Dendritic cell treated with granulocyte-macrophage colony-stimulating factor and Interleukin-4, amounts not matched to agents 40 ng/mL and 50 ng/mL, for 4 days (primary cell): ENCODE measurements at regions of chr21 and their contacts with region 1.

Region 1: GRCh38 chr21:15468368-15468767 is 261.4 kb upstream of the USP25 start:
- H3K4me3 Mint-ChIP-seq: no peak overlapping the region
- H3K27ac Mint-ChIP-seq: no peak overlapping the region
- H3K4me1 Mint-ChIP-seq: no peaks in the 10 kb centered on the region
- H3K27me3 Mint-ChIP-seq: peaks cover 2% of the 10 kb centered on the region

Region 2: DNA sequence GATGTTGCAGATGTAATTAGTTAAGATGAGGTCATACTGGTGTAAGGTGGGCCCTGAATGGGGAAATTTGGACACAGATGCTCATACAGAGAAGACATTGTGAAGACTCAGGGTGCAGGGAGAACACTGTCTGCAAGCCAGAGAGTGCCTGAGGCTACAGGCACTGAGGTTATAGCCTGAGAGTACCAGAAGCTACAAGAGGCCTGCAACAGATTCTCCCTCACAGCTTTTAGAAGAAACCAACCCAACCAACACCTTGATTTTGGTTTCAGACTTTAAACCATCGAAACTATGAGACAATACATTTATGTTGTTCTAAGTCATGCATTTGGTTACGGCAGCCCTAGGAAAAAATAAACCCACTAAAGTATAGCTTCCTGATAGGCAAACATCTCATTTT is 60.3 kb before region 1 on chr21:
- intact Hi-C with region 1: loop called (anchors 10 kb)
- H3K4me3 Mint-ChIP-seq: no peak overlapping the region
- H3K27ac Mint-ChIP-seq: no peak overlapping the region
- H3K4me1 Mint-ChIP-seq: no peaks in the 10 kb centered on the region
- H3K27me3 Mint-ChIP-seq: no peaks in the 10 kb centered on the region

Region 3: GRCh38 chr21:15521637-15522547 is 53.5 kb after region 1 on chr21:
- intact Hi-C with region 1: no loop called
- H3K4me3 Mint-ChIP-seq: no peak overlapping the region
- H3K27ac Mint-ChIP-seq: no peak overlapping the region
- H3K4me1 Mint-ChIP-seq: no peaks in the 10 kb centered on the region
- H3K27me3 Mint-ChIP-seq: no peaks in the 10 kb centered on the region

Region 4: DNA sequence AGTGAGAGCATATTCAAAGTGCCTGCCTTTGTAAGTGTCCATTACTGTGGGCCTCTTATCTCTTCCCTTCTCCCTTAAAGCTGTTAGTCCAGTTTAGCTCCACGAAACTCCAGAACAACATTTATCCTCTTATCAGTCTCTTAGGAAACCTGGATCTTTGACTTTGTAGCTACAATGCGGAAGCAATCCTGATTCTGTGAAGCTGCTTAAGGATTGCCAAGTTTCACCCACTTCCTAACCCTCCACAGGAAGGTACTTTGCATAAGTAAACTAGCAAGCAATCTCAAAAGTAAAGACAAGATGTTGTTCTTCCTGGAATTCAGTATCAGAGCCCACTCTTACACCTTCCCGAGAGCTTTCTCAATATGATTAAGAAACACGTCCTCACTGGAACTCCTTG is 96.5 kb after region 1 on chr21:
- intact Hi-C with region 1: no loop called
- H3K4me3 Mint-ChIP-seq: no peak overlapping the region
- H3K27ac Mint-ChIP-seq: no peak overlapping the region
- H3K4me1 Mint-ChIP-seq: no peaks in the 10 kb centered on the region
- H3K27me3 Mint-ChIP-seq: no peaks in the 10 kb centered on the region

Region 5: GRCh38 chr21:15682186-15682895 is 214.0 kb after region 1 on chr21:
- intact Hi-C with region 1: no loop called
- H3K4me3 Mint-ChIP-seq: peak overlapping the region; percentile 66
- H3K27ac Mint-ChIP-seq: peak overlapping the region; percentile 82
- H3K4me1 Mint-ChIP-seq: peaks cover 33% of the 10 kb centered on the region
- H3K27me3 Mint-ChIP-seq: no peaks in the 10 kb centered on the region